Posterior vena cava (tissue), 2 donors: ENCODE measurements at regions of chr9 and their contacts with region 1.

Region 1: GRCh38 chr9:87039809-87040392 is 92.6 kb upstream of the GAS1 start:
- DNase-seq: no peak

Region 2: GRCh38 chr9:86983260-86984255 is 56.3 kb before region 1 on chr9:
- intact Hi-C with region 1: loop called in 1 of 2 experiments (anchors 10 kb)
- DNase-seq: peak; percentile 81

Region 3: DNA sequence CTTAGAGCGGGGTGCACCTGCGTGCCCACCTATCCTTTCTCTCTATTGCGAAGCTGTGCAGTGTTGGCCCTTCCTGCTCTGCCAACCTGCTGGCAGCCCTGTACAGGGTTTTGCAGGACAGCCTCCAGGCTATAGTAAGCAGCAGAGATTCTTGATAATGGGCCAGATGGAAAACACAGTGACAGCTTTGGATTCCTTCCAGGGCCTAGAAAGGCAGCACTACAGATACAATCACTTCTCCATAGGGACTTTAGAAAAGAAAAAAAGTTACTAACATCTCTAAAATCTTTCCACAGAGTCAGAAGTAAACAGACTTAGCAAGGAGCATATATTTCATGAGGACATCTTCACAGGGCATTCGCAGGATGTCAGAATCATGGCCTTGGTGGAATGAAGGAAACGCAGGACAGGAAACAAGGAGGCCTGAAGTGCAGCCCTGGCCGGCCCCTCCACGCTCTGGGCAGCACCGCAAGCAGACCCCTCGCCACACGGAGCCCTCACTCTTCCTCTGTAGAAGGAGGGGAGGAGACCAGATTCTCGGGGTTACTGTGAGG is 79.5 kb after region 1 on chr9:
- intact Hi-C with region 1: loop called in 1 of 2 experiments (anchors 5 kb)
- DNase-seq: no peak